Activated CD4-positive, alpha-beta memory T cell treated with anti-CD3 and anti-CD28 coated beads for 36 hours (primary cell): ENCODE measurements at regions of chr10 and their contacts with region 1.

Region 1: GRCh38 chr10:119650692-119651513 is at the start of gene BAG3:
- DNase-seq: peak; percentile 87
- H3K4me3 Mint-ChIP-seq: peak within 1 kb of the TSS; percentile 95
- H3K27ac Mint-ChIP-seq: peak within 1 kb of the TSS; percentile 97
- H3K4me1 Mint-ChIP-seq: peaks cover 37% of the 10 kb centered on the region
- H3K27me3 Mint-ChIP-seq: no peaks in the 10 kb centered on the region
- total RNA-seq, gene BAG3: 26.8 to 28.1 TPM

Region 2: DNA sequence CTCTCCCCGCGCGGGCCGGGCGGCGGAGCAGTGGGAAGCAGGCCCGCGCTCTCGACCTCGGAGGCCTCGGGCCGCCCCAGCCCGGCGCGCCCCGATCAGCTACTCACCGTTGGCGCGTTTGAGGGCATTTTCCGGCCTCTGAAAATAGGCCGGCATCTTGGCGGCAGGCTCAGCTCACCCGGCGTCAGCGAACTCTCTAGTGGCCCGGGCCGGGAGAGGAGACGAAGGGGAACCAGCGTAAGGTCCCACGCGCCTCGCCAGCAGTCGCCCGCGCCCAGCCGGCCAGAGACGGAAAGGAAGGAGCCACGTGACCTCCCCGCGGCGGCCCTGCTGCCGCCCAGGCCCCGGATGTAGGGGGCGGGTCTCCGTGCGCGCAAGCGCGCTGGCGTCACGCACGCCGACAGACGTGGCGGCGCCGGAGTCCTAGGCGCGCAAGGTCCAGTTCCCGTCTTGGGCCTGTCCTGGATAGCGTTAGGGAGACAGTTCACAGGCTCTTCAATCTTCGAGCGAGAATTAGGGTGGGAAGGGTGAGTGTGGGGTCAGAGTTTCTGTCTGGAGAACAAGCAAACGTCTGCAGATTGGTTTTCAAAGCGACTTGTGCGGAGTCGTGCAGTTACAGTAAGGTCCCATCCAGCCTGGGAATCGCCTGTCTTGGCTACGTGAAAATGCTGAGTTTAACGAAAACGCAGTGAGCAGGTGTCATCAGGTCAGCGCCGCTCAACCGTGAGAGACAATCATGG is 570.2 kb before region 1 on chr10 and contains the start of gene EIF3A:
- CTCF ChIA-PET with region 1: no interaction called
- POLR2A ChIA-PET with region 1: no interaction called
- intact Hi-C with region 1: loop called (anchors 2 kb)
- DNase-seq: peak; percentile 95
- H3K4me3 Mint-ChIP-seq: peak within 1 kb of the TSS; percentile 92
- H3K27ac Mint-ChIP-seq: peak within 1 kb of the TSS; percentile 96
- H3K4me1 Mint-ChIP-seq: peaks cover 22% of the 10 kb centered on the region
- H3K27me3 Mint-ChIP-seq: no peaks in the 10 kb centered on the region
- total RNA-seq, gene EIF3A: 143 to 148 TPM

Region 3: DNA sequence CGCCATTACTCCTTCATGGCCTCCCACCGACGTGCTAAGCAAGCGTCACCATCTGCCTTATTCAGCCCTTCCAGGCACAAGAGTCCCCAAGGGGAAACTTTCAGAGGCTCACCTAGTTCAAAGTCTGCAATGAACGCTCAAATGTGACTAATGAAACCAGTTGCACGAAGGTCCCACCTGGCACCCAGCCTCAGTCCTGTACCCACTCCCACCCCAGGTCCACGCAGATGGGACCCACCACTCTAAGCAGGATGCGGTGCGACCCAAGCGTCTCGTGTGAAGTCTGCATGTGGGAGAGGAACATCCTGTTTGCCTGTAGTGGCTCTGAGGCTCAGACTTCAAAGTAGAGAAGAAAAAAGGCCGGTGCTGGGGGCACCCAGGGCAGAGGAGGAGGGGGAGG is 148.7 kb before region 1 on chr10:
- CTCF ChIA-PET with region 1: no interaction called
- POLR2A ChIA-PET with region 1: no interaction called
- intact Hi-C with region 1: loop called (anchors 5 kb)
- DNase-seq: peak; percentile 88
- H3K4me3 Mint-ChIP-seq: peak overlapping the region; percentile 59
- H3K27ac Mint-ChIP-seq: peak overlapping the region; percentile 99
- H3K4me1 Mint-ChIP-seq: peaks cover 83% of the 10 kb centered on the region
- H3K27me3 Mint-ChIP-seq: no peaks in the 10 kb centered on the region

Region 4: DNA sequence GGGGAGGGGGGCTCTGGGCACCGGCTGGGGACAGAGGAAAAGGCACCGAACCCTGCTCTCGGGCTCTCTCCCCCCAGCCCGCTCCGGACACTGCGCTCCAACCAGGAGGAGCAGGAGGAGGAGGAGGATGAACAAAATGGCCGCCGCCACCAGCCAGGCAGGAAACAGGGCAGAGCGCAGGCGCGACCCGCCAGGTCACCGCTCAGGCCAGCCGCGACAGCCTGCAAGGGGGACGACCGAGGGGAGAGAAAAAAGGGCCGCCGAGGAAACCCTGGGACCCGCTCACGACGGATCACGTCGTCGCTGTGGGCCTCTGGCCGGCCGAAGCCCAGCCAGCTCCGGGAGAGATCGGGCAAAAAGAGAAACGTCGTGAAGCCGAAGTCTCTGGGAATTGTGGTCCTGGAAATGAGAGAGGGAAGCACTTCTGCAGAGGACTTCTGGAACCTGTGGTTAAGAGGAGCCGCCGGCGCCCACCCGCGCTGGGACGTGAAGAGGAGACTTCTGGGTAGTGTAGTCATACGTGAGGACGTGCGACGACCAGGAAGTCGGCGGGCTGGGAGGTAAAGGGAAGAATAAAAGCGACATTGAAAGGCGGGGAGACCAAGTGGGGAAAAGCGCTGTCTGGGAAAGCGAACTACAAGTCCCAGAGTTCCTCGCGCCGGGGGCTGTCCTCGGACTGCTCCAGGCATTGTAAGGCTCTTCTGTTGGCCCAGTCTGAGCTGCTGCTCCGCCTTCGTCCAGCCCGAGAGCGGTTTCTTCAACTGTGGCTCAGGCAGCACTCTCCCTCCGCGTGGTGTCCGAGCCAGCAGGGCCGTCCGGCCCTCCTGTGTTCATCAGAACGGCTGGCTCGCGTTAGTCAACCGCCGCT is 54.1 kb before region 1 on chr10 and contains the start of gene TIAL1:
- CTCF ChIA-PET with region 1: interaction called, 4 read pairs
- POLR2A ChIA-PET with region 1: interaction called, 4 read pairs
- intact Hi-C with region 1: loop called (anchors 1 kb)
- DNase-seq: peak; percentile 97
- H3K4me3 Mint-ChIP-seq: peak within 1 kb of the TSS; percentile 89
- H3K27ac Mint-ChIP-seq: peak within 1 kb of the TSS; percentile 97
- H3K4me1 Mint-ChIP-seq: peaks cover 42% of the 10 kb centered on the region
- H3K27me3 Mint-ChIP-seq: no peaks in the 10 kb centered on the region
- total RNA-seq, gene TIAL1: 177 TPM

Region 5: DNA sequence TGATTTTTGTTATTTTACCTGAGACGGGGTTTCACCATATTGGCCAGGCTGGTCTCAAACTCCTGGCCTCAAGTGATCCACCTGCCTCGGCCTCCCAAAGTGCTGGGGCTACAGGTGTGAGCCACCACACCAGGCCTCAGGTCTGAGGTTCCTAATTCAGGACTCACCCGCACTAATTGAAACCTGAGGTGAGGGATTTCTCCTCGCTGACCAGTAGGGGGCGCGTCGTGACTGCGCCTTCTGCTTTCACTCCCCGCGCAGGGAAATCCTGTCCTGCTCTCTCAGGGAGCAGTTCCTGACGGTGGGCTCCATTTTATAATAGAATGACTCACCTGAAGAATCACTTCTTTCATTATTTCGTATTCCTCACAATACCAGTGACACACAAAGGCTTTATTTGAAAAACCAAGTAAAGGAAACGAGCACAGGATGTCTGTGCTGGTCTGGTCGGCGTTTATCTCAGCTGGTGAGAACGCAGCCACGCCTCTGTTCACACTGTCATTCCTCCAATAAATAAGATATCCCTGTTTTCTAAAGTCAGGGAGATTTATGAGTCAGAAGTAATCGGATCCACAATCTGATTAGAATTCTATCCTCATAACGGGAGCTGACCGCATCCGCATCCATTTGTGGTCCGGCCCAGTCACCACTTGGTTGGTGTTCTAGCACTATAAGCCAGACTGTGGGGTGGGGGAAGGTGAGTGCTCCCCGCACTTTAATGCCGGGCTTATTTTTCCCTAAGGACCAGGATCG is 35.7 kb after region 1 on chr10:
- CTCF ChIA-PET with region 1: interaction called, 4 read pairs
- POLR2A ChIA-PET with region 1: interaction called, 4 read pairs
- intact Hi-C with region 1: loop called (anchors 1 kb)
- DNase-seq: peak; percentile 90
- H3K4me3 Mint-ChIP-seq: peak overlapping the region; percentile 25
- H3K27ac Mint-ChIP-seq: peak overlapping the region; percentile 30
- H3K4me1 Mint-ChIP-seq: peaks cover 21% of the 10 kb centered on the region
- H3K27me3 Mint-ChIP-seq: no peaks in the 10 kb centered on the region

Region 6: GRCh38 chr10:119896937-119897770 is 246.3 kb after region 1 on chr10:
- CTCF ChIA-PET with region 1: no interaction called
- POLR2A ChIA-PET with region 1: no interaction called
- intact Hi-C with region 1: no loop called
- DNase-seq: no peak
- H3K4me3 Mint-ChIP-seq: no peak overlapping the region
- H3K27ac Mint-ChIP-seq: no peak overlapping the region
- H3K4me1 Mint-ChIP-seq: peaks cover 55% of the 10 kb centered on the region
- H3K27me3 Mint-ChIP-seq: no peaks in the 10 kb centered on the region